HCT116 (cell line): ENCODE measurements at regions of chr2 and their contacts with region 1.

Region 1: DNA sequence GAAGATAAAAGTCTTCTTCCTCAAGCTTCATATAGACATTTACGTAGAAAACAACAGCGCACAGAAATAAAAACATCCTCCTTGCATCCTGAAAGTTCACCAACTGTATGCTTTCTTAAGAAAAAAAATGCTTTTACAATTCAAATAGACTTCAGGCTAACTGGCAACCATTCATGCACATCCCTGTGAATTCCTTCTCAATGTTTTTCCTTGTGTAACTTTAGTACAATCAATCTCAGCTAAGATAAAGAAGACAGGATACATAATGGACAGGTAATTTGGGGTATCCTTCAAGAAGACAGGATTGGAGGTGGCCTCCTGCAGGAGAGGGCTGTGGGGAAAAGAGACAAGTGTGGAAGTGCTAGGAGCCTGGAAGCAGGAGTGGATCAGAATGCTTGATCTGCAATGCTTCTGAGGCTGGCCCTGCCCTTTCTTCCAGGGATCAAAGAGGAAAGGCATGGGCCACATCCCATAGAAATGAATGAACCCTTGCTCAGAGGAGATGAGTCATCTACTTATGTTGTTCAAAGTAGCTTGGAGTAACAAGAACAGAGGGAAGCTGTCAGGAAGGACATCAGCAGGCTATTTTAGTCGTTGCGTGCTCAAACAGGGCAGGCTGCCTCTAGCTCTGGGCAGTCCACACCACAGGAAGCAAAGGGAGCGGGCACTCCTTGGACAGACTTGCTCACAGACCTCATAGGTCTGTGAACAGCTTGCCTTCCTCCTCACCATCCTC is 126.6 kb downstream of the TMEM131 start:
- DNase-seq: peak; percentile 98
- ATAC-seq: peak; percentile 90
- H3K4me3 ChIP-seq: peak overlapping the region; percentile 18 to 41
- H3K27ac ChIP-seq: peak overlapping the region; percentile 84
- H3K4me1 ChIP-seq: peaks cover 51 to 75% of the 10 kb centered on the region in 2 experiments
- H3K27me3 ChIP-seq: no peaks in the 10 kb centered on the region
- CTCF ChIP-seq: no peak
- POLR2A ChIP-seq: no peak
- RAD21 ChIP-seq: peak; percentile 54

Region 2: GRCh38 chr2:97995734-97996624 is 126.8 kb after region 1 on chr2 and contains the start of gene TMEM131:
- CTCF ChIA-PET with region 1: no interaction called
- POLR2A ChIA-PET with region 1: interaction called, 5 read pairs
- RAD21 ChIA-PET with region 1: no interaction called
- intact Hi-C with region 1: loop called (anchors 2 kb)
- DNase-seq: peak; percentile 89
- ATAC-seq: peak; percentile 90
- H3K4me3 ChIP-seq: peak within 1 kb of the TSS; percentile 73 to 90
- H3K27ac ChIP-seq: peak within 1 kb of the TSS; percentile 97
- H3K4me1 ChIP-seq: peaks cover 7 to 40% of the 10 kb centered on the region in 2 experiments; a peak in 3 of 4 replicates
- H3K27me3 ChIP-seq: no peaks in the 10 kb centered on the region
- CTCF ChIP-seq: no peak
- POLR2A ChIP-seq: peak; percentile 24
- RAD21 ChIP-seq: no peak
- total RNA-seq, gene TMEM131: 51.5 TPM

Region 3: DNA sequence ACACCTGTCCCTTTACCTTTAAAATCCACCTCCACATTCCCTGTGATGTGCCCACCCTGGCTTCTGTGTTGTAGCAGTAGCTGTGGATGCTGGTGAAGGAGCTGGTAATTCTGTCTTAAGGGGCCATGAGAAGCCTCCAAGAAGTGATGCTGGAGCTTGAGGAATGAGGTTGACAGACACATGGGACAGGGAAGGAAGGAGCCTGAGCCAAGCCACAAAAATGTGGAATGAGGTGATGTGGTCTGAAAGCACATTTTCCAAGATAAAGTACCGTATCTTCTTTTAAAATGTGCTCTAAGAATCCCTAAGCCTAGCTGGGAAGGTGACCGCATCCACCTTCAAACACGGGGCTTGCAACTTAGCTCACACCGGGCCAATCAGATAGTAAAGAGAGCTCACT is 249.0 kb after region 1 on chr2:
- CTCF ChIA-PET with region 1: no interaction called
- POLR2A ChIA-PET with region 1: no interaction called
- RAD21 ChIA-PET with region 1: no interaction called
- intact Hi-C with region 1: no loop called
- DNase-seq: no peak
- ATAC-seq: no peak
- H3K4me3 ChIP-seq: no peak overlapping the region
- H3K27ac ChIP-seq: no peak overlapping the region
- H3K4me1 ChIP-seq: no peaks in the 10 kb centered on the region
- H3K27me3 ChIP-seq: no peaks in the 10 kb centered on the region
- CTCF ChIP-seq: no peak
- POLR2A ChIP-seq: no peak
- RAD21 ChIP-seq: no peak

Region 4: DNA sequence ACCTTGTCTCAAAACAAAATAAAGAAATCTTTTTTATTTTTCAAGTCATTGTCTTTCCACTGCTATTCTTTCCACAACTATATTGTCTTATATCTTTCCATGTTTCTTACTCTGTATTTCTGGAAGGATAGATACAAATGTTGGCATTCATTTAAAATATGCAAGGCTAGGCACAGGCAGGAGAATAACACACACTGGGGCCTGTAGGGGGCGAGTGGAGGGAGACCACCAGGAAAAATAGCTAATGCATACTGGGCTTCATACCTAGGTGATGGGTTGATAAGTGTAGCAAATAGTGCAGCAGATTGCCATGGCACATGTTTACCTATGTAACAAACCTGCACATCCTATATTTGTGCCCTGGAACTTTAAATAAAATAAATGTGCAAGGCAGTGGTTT is 1321.4 kb after region 1 on chr2:
- CTCF ChIA-PET with region 1: no interaction called
- POLR2A ChIA-PET with region 1: no interaction called
- RAD21 ChIA-PET with region 1: no interaction called
- intact Hi-C with region 1: no loop called
- DNase-seq: no peak
- ATAC-seq: 0 out of 2 replicates have a peak, but pooled peaks have one; percentile 40
- H3K4me3 ChIP-seq: no peak overlapping the region
- H3K27ac ChIP-seq: no peak overlapping the region
- H3K4me1 ChIP-seq: no peaks in the 10 kb centered on the region
- H3K27me3 ChIP-seq: no peaks in the 10 kb centered on the region
- CTCF ChIP-seq: peak in 2 of 3 experiments; percentile 28 to 48; a peak in 4 of 6 replicates
- POLR2A ChIP-seq: no peak
- RAD21 ChIP-seq: no peak